SK-MEL-5 (cell line): ENCODE measurements at regions of chr1 and their contacts with region 1.

Region 1: GRCh38 chr1:208007938-208008342 is 97.0 kb upstream of the CD34 start:
- DNase-seq: no peak

Region 2: DNA sequence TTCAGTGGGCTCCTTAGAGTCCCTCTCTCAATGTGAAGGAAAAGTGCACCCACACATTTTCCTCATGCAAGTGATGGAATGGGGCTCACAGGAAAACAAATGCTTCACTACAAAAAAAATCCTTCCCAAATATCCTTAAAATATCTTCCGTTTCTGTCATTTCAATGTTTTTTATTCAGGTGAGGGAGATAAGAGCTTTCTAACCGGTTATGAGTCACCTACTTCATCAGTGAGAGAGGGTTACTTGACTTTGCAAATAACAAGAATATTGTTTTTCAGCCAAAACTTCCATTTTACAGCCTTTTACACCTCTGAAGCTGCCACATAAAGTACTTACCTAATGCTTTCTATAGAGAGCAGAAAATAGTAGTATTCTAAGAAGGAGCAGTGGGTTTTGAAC is 784.8 kb before region 1 on chr1:
- in situ Hi-C with region 1: no loop called
- DNase-seq: no peak

Region 3: GRCh38 chr1:207711285-207711684 is 296.7 kb before region 1 on chr1:
- in situ Hi-C with region 1: no loop called
- DNase-seq: peak; percentile 61

Region 4: GRCh38 chr1:208065862-208066261 is 57.9 kb after region 1 on chr1:
- in situ Hi-C with region 1: no loop called
- DNase-seq: peak; percentile 36

Region 5: GRCh38 chr1:208245185-208245705 is 237.3 kb after region 1 on chr1:
- in situ Hi-C with region 1: loop called (anchors 25 kb)
- DNase-seq: peak; percentile 94